ENCODE measurements at regions of chr15 and their contacts with region 1.

Region 1: GRCh38 chr15:87949575-87950223 is 306.8 kb downstream of the NTRK3 start:
- DNase-seq: no peak
- H3K4me3 ChIP-seq: no peak overlapping the region
- CTCF ChIP-seq: no peak
- POLR2A ChIP-seq: no peak

Region 2: GRCh38 chr15:87919064-87919463 is 30.6 kb before region 1 on chr15:
- intact Hi-C with region 1: no loop called
- DNase-seq: no peak
- H3K4me3 ChIP-seq: no peak overlapping the region
- CTCF ChIP-seq: no peak
- POLR2A ChIP-seq: no peak

Region 3: GRCh38 chr15:88878720-88879184 is 929.1 kb after region 1 on chr15:
- intact Hi-C with region 1: loop called (anchors 5 kb)
- DNase-seq: no peak
- H3K4me3 ChIP-seq: no peak overlapping the region
- CTCF ChIP-seq: no peak
- POLR2A ChIP-seq: no peak

Measured in lower leg skin (tissue), 4 donors.